Activated T-helper 1 cell treated with anti-CD3 and anti-CD28 coated beads, Interleukin-12 subunit alpha, Interleukin-12 subunit beta, Interleukin-2, Interleukin-4 antibody, amounts not matched to agents 30 ng/mL and 10 ng/mL and 1 ng/mL, durations not matched to agents 14 hours and 24 hours and 36 hours (primary cell): ENCODE measurements at regions of chr5 and their contacts with region 1.

Region 1: DNA sequence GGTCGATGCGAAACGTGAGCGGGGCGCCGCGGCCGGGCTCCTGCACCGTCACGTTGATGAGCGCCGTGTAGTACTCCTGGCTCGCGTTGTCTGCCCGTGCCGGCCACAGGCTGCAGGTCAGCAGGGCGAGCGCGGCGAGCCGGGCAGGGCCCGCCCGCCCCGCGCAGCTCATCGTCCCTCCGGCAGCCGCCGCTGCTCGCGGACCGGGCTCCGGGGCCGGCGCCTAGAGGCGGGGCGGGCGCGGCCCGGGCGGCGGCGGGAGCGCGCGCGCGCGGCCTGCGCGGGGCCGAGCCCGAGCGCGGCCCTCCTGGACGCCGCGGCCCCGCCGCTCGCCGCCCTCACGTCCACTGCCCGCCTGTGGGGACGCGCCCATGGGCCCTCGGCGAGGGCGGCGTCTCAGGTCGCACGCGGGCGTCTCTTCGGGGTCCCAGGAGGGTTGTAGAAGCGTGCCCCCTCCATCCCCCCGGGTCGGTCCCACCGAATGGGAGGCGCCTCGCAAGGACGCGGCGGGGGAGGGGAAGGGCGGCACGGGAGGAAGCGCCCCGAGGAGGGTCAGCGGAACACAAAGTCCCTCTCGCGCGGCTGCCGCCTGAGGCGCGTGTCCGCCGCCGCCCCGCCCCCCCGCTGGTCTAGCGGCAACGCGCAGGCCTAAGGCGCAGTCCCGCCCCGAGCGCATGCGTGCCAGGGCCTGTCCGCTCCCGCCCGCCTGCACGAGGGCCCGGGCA is at the start of gene RNF130:
- DNase-seq: peak; percentile 76
- H3K4me3 Mint-ChIP-seq: peak within 1 kb of the TSS; percentile 82
- H3K27ac Mint-ChIP-seq: peak within 1 kb of the TSS; percentile 50
- H3K4me1 Mint-ChIP-seq: peaks cover 5% of the 10 kb centered on the region
- H3K27me3 Mint-ChIP-seq: peaks cover 39% of the 10 kb centered on the region
- total RNA-seq, gene RNF130: 7.6 and 7.7 TPM in 2 replicates

Region 2: DNA sequence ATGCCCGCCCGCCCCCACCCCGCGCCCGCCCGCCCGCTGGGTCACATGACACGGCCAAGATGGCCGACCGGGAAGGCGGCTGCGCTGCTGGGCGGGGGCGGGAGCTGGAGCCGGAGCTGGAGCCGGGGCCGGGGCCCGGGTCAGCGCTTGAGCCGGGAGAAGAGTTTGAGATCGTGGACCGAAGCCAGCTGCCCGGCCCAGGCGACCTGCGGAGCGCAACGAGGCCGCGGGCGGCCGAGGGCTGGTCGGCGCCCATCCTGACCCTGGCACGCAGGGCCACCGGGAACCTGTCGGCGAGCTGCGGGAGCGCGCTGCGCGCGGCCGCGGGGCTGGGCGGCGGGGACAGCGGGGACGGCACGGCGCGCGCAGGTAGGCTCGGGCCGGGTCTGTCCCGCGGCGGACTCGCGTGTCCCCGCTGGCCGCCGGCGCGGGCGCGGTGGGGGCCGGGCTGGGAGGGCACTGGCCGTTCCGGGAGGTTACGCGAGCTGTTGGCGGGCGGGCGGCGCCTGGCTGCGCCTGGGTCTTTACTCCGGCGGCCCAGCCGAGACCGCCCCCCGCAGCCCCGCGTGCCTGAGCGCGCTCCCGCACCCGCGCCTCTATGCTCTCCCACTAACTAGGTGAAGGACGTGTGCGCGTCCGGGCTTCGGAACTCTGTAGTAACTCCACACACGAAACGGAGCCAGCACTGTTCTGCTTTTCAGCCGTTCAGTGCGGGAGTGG is 521.0 kb before region 1 on chr5 and contains the start of gene RUFY1:
- intact Hi-C with region 1: loop called (anchors 5 kb)
- DNase-seq: peak; percentile 83
- H3K4me3 Mint-ChIP-seq: peak within 1 kb of the TSS; percentile 99
- H3K27ac Mint-ChIP-seq: peak within 1 kb of the TSS; percentile 99
- H3K4me1 Mint-ChIP-seq: peaks cover 28% of the 10 kb centered on the region
- H3K27me3 Mint-ChIP-seq: peaks cover 2% of the 10 kb centered on the region
- total RNA-seq, gene RUFY1: 37.0 and 38.3 TPM in 2 replicates

Region 3: GRCh38 chr5:179678223-179679013 is 393.3 kb before region 1 on chr5:
- intact Hi-C with region 1: loop called (anchors 5 kb)
- DNase-seq: peak; percentile 93
- H3K4me3 Mint-ChIP-seq: peak overlapping the region; percentile 99
- H3K27ac Mint-ChIP-seq: peak overlapping the region; percentile 98
- H3K4me1 Mint-ChIP-seq: peaks cover 21% of the 10 kb centered on the region
- H3K27me3 Mint-ChIP-seq: no peaks in the 10 kb centered on the region

Region 4: GRCh38 chr5:179795863-179796833 is 275.5 kb before region 1 on chr5:
- intact Hi-C with region 1: loop called (anchors 5 kb)
- DNase-seq: peak; percentile 63
- H3K4me3 Mint-ChIP-seq: peak overlapping the region; percentile 67
- H3K27ac Mint-ChIP-seq: peak overlapping the region; percentile 40
- H3K4me1 Mint-ChIP-seq: peaks cover 8% of the 10 kb centered on the region
- H3K27me3 Mint-ChIP-seq: no peaks in the 10 kb centered on the region

Region 5: DNA sequence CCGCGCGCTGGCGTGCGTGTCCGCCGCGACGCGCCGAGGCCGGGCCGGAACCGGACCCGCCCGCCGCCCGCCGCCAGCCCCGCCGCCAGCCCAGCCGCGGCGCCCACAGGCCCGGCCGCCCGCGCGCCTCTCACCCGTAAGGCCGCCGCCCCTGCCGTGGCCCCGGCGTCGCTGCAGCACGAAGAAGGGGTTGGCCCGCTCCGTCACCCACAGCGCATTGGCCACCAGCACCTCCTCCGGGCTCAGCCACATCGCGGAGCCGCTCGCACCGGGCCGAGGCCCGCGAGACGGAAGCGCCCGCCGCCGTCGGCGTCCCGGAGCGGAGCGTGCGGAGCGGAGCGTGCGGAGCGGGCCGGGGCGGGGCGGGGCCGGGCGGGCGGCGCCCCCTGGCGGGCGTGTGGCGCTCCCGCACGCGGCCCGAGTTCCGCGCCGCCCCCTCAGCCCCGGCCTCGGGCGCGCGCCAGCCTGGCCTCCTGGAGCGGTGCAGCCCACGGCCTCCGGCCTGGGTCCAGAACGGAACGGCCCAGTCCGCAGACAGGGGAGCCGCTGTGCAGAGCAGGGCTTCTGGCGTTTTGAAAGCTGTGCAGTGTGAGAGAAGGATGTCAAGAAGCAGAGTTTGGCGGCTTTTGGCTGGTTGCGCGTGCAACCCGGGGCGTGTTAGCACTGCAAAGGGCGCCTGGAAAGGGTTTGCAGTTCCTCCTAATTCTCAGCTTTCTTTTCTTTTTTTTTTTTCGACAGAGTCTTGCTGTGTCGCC is 163.9 kb before region 1 on chr5 and contains the start of gene TBC1D9B:
- intact Hi-C with region 1: loop called (anchors 5 kb)
- DNase-seq: peak; percentile 69
- H3K4me3 Mint-ChIP-seq: peak within 1 kb of the TSS; percentile 95
- H3K27ac Mint-ChIP-seq: peak within 1 kb of the TSS; percentile 89
- H3K4me1 Mint-ChIP-seq: peaks cover 18% of the 10 kb centered on the region
- H3K27me3 Mint-ChIP-seq: peaks cover 2% of the 10 kb centered on the region
- total RNA-seq, gene TBC1D9B: 123 and 127 TPM in 2 replicates

Region 6: GRCh38 chr5:180090098-180090768 is 18.5 kb after region 1 on chr5:
- intact Hi-C with region 1: loop called (anchors 1 kb)
- DNase-seq: peak; percentile 61
- H3K4me3 Mint-ChIP-seq: peak overlapping the region; percentile 79
- H3K27ac Mint-ChIP-seq: no peak overlapping the region
- H3K4me1 Mint-ChIP-seq: peaks cover 4% of the 10 kb centered on the region
- H3K27me3 Mint-ChIP-seq: peaks cover 12% of the 10 kb centered on the region